ENCODE measurements at regions of chr14 and their contacts with region 1.

Region 1: GRCh38 chr14:59464486-59465315 is 479 bp downstream of the GPR135 start:
- DNase-seq: no peak
- ATAC-seq: no peak
- H3K4me3 ChIP-seq: peak overlapping the region in 1 of 2 experiments; percentile 7; a peak in 1 of 4 replicates
- H3K27ac ChIP-seq: no peak overlapping the region
- H3K4me1 ChIP-seq: no peaks in the 10 kb centered on the region
- H3K27me3 ChIP-seq: no peaks in the 10 kb centered on the region
- CTCF ChIP-seq: no peak

Region 2: DNA sequence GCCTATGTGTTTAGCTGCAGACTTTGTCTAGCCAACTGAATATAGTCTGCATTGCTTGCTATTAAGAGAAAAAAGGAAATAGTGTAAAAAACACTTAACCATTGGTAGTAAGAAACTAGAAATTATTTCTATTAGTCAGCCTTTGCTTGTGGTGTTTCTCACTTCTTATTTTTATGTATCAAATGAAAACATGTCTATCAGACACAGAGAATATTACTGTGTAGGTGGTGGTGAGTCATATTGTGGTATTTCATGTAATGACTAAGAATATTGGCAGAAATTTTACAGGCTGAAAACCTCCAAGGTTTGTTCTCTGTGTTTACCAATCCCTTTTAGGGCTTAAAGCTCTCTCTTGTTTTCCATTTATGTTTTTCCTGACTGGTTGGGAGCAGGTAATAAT is 189.0 kb before region 1 on chr14:
- CTCF ChIA-PET with region 1: interaction called, 14 read pairs
- POLR2A ChIA-PET with region 1: no interaction called
- in situ Hi-C with region 1: no loop called
- intact Hi-C with region 1: no loop called
- DNase-seq: peak; percentile 75
- ATAC-seq: peak; percentile 85
- H3K4me3 ChIP-seq: no peak overlapping the region; a peak in 1 of 4 replicates
- H3K27ac ChIP-seq: peak overlapping the region; percentile 63; the same call in 1 of the 2 replicates
- H3K4me1 ChIP-seq: peaks cover 11% of the 10 kb centered on the region
- H3K27me3 ChIP-seq: no peaks in the 10 kb centered on the region
- CTCF ChIP-seq: no peak